PC-9 (cell line): ENCODE measurements at regions of chr1 and their contacts with region 1.

Region 1: DNA sequence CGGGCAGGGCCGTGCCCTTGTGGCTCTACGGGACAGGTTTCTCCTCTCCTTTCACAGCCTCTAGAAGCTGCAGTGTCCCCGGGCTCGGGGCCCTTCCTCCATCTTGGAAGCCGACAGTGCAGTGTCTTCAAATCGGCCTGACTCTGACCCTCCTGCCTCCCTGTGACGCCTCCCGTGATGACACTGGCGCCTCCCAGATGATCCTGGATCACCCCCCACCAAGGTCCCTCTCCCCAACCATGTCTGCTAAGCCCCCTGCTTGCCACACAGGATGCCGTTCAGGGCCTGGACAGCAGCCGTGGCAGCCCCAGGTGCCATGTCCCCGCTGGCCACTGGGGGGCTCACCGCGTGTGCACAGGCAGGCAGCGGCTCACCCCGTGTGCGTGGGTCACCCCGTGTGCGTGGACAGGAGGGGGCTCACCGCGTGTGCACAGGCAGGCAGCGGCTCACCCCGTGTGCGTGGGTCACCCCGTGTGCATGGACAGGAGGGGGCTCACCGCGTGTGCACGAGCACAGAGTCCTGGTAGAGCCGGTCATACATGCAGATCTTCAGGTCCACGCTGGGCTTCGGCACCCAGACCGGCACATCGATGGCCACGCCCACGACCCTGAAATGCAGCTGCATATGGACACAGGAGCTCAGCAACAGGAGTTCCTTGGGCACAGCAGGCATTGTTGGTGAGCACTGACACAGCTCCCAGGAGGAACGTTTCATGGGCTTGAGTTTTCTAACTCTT is 24.9 kb upstream of the TMEM52 start:
- DNase-seq: peak in 1 of 2 experiments; percentile 52
- H3K4me3 ChIP-seq: peak overlapping the region; percentile 27; the same call in 1 of the 2 replicates
- H3K27ac ChIP-seq: no peak overlapping the region
- H3K4me1 ChIP-seq: no peaks in the 10 kb centered on the region
- H3K27me3 ChIP-seq: peaks cover 67% of the 10 kb centered on the region
- CTCF ChIP-seq: peak; percentile 95

Region 2: DNA sequence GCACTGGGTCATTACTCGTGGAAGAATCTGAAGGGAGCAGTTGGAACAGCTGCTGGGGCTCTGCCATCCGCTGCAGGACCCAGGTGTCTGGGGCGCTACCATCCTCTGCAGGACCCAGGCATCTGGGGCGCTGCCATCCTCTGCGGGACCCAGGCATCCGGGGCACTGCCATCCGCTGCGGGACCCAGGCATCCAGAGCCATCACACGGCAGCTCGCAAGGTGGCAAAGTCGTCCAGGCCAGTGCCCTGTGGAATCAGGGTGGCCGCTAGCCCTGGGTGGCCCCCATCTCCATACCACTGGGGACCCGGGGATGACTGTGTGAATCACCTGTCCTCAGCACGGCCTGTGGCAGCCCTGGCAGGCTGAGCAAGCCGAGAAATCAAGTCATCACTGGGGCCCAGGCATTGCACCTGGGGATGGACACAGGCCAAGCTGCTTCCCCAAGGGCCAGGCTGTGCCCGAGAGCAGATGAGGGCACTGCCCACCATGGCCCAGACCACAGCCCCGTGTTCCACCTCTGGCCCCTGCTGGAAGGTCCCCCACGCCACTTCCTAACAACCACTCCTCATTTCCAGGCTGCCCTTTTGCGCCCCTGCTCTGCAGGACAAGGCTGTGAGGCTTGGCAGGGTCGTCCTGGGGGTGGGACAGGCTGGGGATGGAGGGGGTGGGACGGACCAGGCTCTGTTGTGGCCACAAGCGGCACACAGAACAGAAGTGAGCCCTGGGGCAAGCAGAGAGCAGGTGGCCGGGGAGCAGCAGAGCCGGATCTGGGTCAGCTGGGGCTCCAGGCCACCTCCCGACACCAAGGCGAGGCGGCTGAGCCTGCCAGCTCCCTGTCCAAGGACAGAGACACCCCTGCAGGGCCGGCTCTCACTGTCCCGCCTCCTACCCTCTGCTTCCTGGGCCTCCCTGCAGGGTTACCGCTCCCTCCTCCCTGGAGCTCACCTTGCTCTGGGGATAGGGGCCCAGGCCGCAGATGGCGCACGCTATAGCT is 87.8 kb after region 1 on chr1:
- CTCF ChIA-PET with region 1: no interaction called
- POLR2A ChIA-PET with region 1: no interaction called
- intact Hi-C with region 1: loop called (anchors 5 kb)
- DNase-seq: no peak
- H3K4me3 ChIP-seq: no peak overlapping the region
- H3K27ac ChIP-seq: no peak overlapping the region
- H3K4me1 ChIP-seq: no peaks in the 10 kb centered on the region
- H3K27me3 ChIP-seq: peaks cover 81% of the 10 kb centered on the region
- CTCF ChIP-seq: no peak

Region 3: GRCh38 chr1:2044510-2045319 is 100.7 kb after region 1 on chr1:
- CTCF ChIA-PET with region 1: interaction called, 4 read pairs
- POLR2A ChIA-PET with region 1: no interaction called
- intact Hi-C with region 1: loop called (anchors 1 kb)
- DNase-seq: peak in 1 of 2 experiments; percentile 72
- H3K4me3 ChIP-seq: no peak overlapping the region
- H3K27ac ChIP-seq: no peak overlapping the region
- H3K4me1 ChIP-seq: no peaks in the 10 kb centered on the region
- H3K27me3 ChIP-seq: peaks cover 22% of the 10 kb centered on the region
- CTCF ChIP-seq: peak; percentile 66